Psoas muscle (tissue), 8 donors: ENCODE measurements at regions of chr14 and their contacts with region 1.

Region 1: DNA sequence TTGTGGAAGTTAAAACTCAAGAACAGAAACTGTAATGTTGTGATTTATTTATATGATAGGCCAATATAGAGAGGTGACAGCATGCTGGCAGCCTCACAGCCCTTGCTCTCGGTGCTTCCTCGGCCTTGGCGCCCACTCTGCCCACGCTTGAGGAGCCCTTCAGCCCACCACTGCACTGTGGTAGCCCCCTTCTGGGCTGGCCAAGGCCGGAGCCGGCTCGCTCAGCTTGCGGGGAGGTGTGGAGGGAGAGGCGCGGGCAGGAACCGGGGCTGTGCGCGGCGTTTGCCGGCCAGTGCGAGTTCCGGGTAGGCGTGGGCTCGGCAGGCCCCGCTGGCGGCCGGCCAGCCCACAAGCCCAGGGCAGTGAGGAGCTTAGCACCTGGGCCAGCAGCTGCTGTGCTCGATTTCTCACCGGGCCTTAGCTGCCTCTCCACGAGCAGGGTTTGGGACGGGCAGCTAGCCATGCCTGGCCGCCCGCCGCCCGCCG is 65.8 kb upstream of the SLC8A3 start:
- DNase-seq: peak; percentile 47 to 78
- ATAC-seq: peak; percentile 89 to 94 (median 92)
- H3K4me3 ChIP-seq: peak overlapping the region; percentile 59
- H3K27ac ChIP-seq: peak overlapping the region; percentile 3
- H3K4me1 ChIP-seq: no peaks in the 10 kb centered on the region
- H3K27me3 ChIP-seq: peaks cover 0 to 3% (median 0%) of the 10 kb centered on the region in 3 donors
- CTCF ChIP-seq: no peak

Region 2: GRCh38 chr14:70045844-70046535 is 208.5 kb before region 1 on chr14:
- intact Hi-C with region 1: loop called (anchors 2 kb)
- DNase-seq: peak; percentile 56 to 82
- ATAC-seq: peak; percentile 83 to 89 (median 87)
- H3K4me3 ChIP-seq: no peak overlapping the region
- H3K27ac ChIP-seq: no peak overlapping the region
- H3K4me1 ChIP-seq: no peaks in the 10 kb centered on the region
- H3K27me3 ChIP-seq: no peaks in the 10 kb centered on the region
- CTCF ChIP-seq: peak; percentile 75

Region 3: GRCh38 chr14:70086685-70087379 is 167.7 kb before region 1 on chr14:
- intact Hi-C with region 1: loop called in 1 of 2 experiments (anchors 10 kb)
- DNase-seq: peak in 1 of 2 donors; percentile 15
- ATAC-seq: peak in 3 of 4 donors; percentile 26 to 76 (median 58)
- H3K4me3 ChIP-seq: no peak overlapping the region
- H3K27ac ChIP-seq: no peak overlapping the region
- H3K4me1 ChIP-seq: peaks cover 21% of the 10 kb centered on the region
- H3K27me3 ChIP-seq: no peaks in the 10 kb centered on the region
- CTCF ChIP-seq: peak; percentile 42

Region 4: GRCh38 chr14:70188659-70189455 is 65.7 kb before region 1 on chr14 and contains the start of gene SLC8A3:
- intact Hi-C with region 1: loop called in 1 of 2 experiments (anchors 5 kb)
- DNase-seq: peak; percentile 59 to 86
- ATAC-seq: peak; percentile 68 to 71 (median 70)
- H3K4me3 ChIP-seq: peak within 1 kb of the TSS; percentile 91
- H3K27ac ChIP-seq: peak within 1 kb of the TSS; percentile 98
- H3K4me1 ChIP-seq: peaks cover 47% of the 10 kb centered on the region
- H3K27me3 ChIP-seq: no peaks in the 10 kb centered on the region
- CTCF ChIP-seq: no peak
- total RNA-seq, gene SLC8A3: 18.0 to 53.6 (median 26.8) TPM